ENCODE measurements at regions of chr12 and their contacts with region 1.

Region 1: DNA sequence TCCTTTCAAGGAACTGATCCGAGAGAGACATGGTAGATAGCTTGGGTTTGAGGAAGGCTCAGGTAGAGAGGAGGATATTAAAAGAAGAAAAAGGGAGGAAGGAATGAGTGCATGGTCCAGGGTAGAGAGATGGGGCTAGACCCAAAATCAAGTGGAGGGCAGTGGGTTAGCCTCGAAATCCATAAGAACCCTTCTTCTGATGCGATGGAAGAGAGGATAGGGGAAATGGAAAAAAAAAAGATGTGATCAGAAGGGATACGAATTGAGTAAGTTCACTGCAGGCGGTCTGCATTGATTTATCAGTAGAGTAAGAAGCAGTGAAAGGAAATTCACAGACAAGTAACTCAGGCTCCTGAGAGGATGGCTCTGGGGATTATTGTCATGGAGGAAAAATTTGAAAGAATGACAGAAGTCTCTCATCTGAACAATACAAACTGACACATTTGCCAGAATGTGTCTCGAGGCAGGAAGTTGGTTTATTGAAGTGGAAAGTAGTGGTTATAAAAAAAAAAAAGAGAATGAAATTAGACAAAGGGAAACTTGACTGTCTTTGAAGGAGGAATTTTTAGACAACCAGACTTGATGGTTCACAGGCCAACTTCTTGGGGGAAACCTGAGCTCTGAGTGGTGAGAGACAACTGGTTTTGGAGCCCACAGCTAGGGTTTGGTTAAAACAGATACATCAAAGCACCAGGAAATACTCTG is 10.2 kb downstream of the PPFIBP1 start:
- DNase-seq: peak; percentile 86
- ATAC-seq: peak; percentile 77
- H3K4me3 ChIP-seq: peak overlapping the region; percentile 27; the same call in 1 of the 2 replicates
- H3K27ac ChIP-seq: peak overlapping the region; percentile 78
- H3K4me1 ChIP-seq: peaks cover 62% of the 10 kb centered on the region
- H3K27me3 ChIP-seq: no peaks in the 10 kb centered on the region
- CTCF ChIP-seq: no peak
- EP300 ChIP-seq: no peak
- POLR2A ChIP-seq: no peak
- RAD21 ChIP-seq: peak; percentile 9; the same call in 1 of the 2 replicates

Region 2: DNA sequence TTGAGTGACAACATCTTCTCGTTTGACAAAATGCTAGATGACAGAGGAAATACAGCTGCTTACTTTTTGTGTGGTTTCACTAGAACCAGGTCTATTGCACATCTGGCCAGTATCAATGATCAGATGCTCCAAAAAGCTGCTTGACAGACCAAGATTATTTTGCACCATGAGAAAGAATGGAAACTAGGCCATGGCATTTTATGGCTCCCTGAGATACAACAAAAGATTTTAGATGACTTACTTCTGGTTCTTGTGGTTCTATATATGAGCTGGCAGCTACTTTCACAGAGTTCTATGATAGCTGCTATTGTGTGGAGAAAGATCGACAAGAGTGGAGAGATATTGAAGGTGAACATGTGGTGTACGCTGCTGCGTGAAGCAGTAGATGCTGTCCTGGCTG is 36.1 kb before region 1 on chr12:
- CTCF ChIA-PET with region 1: no interaction called
- POLR2A ChIA-PET with region 1: no interaction called
- RAD21 ChIA-PET with region 1: no interaction called
- SMC1A ChIA-PET with region 1: interaction called, 3 read pairs
- in situ Hi-C with region 1: no loop called
- intact Hi-C with region 1: loop called (anchors 1 kb)
- DNase-seq: peak; percentile 28
- ATAC-seq: peak; percentile 94
- H3K4me3 ChIP-seq: no peak overlapping the region
- H3K27ac ChIP-seq: no peak overlapping the region
- H3K4me1 ChIP-seq: no peaks in the 10 kb centered on the region
- H3K27me3 ChIP-seq: no peaks in the 10 kb centered on the region; a peak in 1 of 4 replicates
- CTCF ChIP-seq: no peak
- EP300 ChIP-seq: no peak
- POLR2A ChIP-seq: no peak
- RAD21 ChIP-seq: 0 out of 2 replicates have a peak, but pooled peaks have one; percentile 1

Region 3: DNA sequence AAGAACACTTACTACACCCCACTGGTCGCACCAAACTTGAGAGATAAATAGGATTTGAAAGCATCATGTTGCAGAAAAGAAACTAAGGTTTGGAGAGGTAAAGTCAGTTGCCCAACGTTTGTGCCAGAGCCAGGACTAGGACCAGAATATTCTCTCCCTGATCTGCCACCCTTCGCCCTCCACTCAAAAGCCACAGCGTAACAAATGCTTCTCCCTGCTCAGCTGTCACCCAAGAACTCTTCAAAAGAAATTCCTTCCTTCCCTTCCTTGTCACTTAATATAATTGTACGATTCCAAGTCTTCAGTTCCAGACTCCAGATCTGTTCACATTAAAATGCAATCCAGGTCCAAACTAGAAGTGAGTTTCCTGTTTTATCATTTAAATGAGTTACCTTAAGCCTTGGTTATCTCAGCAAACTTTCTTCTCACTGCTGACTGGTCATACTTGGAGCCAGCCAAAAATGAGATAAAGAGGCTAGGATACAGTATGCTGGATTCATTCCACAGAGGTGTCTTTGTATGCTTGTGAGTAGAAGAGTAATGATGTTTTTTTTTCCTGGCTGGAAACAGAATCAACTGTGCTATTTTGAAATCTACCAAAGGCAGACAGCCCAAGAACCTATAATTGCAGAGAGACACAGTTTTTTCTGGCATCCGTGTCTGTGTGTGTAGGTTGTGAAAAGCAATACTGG is 23.0 kb before region 1 on chr12:
- CTCF ChIA-PET with region 1: no interaction called
- POLR2A ChIA-PET with region 1: no interaction called
- RAD21 ChIA-PET with region 1: no interaction called
- SMC1A ChIA-PET with region 1: no interaction called
- in situ Hi-C with region 1: no loop called
- intact Hi-C with region 1: no loop called
- DNase-seq: no peak
- ATAC-seq: no peak
- H3K4me3 ChIP-seq: no peak overlapping the region
- H3K27ac ChIP-seq: no peak overlapping the region
- H3K4me1 ChIP-seq: no peaks in the 10 kb centered on the region
- H3K27me3 ChIP-seq: no peaks in the 10 kb centered on the region
- CTCF ChIP-seq: no peak
- EP300 ChIP-seq: no peak
- POLR2A ChIP-seq: no peak
- RAD21 ChIP-seq: no peak

Region 4: GRCh38 chr12:27523642-27524493 is 10.3 kb before region 1 on chr12 and contains the start of gene PPFIBP1:
- CTCF ChIA-PET with region 1: no interaction called
- POLR2A ChIA-PET with region 1: interaction called, 4 read pairs
- RAD21 ChIA-PET with region 1: interaction called, 5 read pairs
- SMC1A ChIA-PET with region 1: interaction called, 11 read pairs
- in situ Hi-C with region 1: no loop called
- intact Hi-C with region 1: no loop called
- DNase-seq: peak; percentile 91
- ATAC-seq: peak; percentile 98
- H3K4me3 ChIP-seq: peak within 1 kb of the TSS; percentile 73
- H3K27ac ChIP-seq: peak within 1 kb of the TSS; percentile 58
- H3K4me1 ChIP-seq: no peaks in the 10 kb centered on the region
- H3K27me3 ChIP-seq: no peaks in the 10 kb centered on the region
- CTCF ChIP-seq: peak in 1 of 3 experiments; percentile 23; a peak in 2 of 6 replicates
- EP300 ChIP-seq: no peak
- POLR2A ChIP-seq: peak; percentile 80
- RAD21 ChIP-seq: peak; percentile 43
- polyA plus RNA-seq, gene PPFIBP1: 0.47 to 0.55 TPM

Region 5: DNA sequence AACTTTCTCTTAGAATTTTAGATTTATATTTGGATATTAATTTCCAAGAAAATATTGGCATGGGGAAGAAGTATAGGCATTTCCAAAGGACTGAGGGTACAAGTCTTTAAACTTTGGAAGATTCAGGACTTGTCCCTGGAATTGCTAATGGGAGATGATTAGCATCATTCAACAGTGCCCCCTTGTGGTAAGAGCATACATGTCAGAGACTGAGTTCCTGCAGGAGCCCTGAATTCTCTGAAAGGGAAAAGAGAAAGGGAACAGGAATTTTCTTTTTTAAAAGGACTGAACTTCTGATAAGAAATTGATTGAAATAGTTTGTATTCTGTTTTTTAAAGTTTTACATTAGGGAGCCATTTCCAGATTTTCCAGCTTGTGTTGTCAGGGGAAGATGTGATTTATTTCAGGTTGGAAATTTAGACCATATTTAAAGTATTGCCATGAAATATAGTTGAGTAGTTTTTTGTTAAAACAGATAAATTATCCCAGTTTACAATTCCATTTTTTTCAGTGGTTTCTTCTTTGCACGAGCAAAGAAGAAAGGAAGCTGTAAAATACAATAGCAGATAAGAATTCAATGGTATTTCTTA is 118.1 kb after region 1 on chr12:
- CTCF ChIA-PET with region 1: interaction called, 5 read pairs
- POLR2A ChIA-PET with region 1: no interaction called
- RAD21 ChIA-PET with region 1: no interaction called
- SMC1A ChIA-PET with region 1: interaction called, 10 read pairs
- in situ Hi-C with region 1: no loop called
- intact Hi-C with region 1: loop called (anchors 2 kb)
- DNase-seq: peak; percentile 8
- ATAC-seq: peak; percentile 71
- H3K4me3 ChIP-seq: no peak overlapping the region
- H3K27ac ChIP-seq: no peak overlapping the region
- H3K4me1 ChIP-seq: peaks cover 5% of the 10 kb centered on the region; the same call in 1 of the 2 replicates
- H3K27me3 ChIP-seq: no peaks in the 10 kb centered on the region
- CTCF ChIP-seq: peak; percentile 77 to 81 (median 80)
- EP300 ChIP-seq: no peak
- POLR2A ChIP-seq: no peak
- RAD21 ChIP-seq: peak; percentile 90

Region 6: DNA sequence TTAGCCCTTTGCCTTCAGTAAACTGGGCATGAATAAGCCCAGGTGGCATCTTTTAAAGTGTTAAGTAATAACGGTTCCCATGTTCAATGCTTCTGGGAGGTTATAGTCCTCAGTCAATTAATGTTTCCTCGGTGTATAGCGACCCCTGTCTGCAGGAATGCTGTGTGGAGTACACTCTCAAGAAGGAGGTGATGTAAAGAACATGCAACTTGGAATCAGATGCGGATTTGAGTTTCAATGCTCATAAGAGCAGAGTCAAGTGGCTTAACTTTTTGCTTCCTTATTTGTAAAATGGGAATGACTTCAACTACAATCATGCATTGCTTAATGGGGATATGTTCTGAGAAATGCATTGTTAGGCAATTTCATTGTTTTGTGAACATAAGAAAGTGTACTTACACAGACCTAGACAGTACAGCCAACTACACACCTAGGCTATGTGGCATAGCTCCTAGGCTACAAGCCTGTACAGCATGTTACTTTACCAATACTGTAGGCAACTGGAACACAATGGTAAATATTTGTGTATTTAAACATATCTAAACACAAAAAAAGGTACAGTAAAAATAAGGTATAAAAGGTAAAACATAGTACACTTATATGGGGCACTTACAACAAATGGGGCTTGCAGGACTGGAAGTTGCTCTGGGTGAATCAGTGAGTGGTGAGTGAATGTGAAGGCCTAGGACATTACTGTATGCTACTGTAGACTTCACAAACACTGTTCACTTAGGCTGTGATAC is 169.7 kb after region 1 on chr12:
- CTCF ChIA-PET with region 1: no interaction called
- POLR2A ChIA-PET with region 1: no interaction called
- RAD21 ChIA-PET with region 1: no interaction called
- SMC1A ChIA-PET with region 1: no interaction called
- in situ Hi-C with region 1: no loop called
- intact Hi-C with region 1: loop called (anchors 5 kb)
- DNase-seq: peak; percentile 43
- ATAC-seq: peak; percentile 99
- H3K4me3 ChIP-seq: no peak overlapping the region
- H3K27ac ChIP-seq: no peak overlapping the region
- H3K4me1 ChIP-seq: no peaks in the 10 kb centered on the region
- H3K27me3 ChIP-seq: no peaks in the 10 kb centered on the region
- CTCF ChIP-seq: peak; percentile 83 to 88 (median 88)
- EP300 ChIP-seq: no peak
- POLR2A ChIP-seq: no peak
- RAD21 ChIP-seq: peak; percentile 88